ENCODE measurements at regions of chr14 and their contacts with region 1.

Region 1: DNA sequence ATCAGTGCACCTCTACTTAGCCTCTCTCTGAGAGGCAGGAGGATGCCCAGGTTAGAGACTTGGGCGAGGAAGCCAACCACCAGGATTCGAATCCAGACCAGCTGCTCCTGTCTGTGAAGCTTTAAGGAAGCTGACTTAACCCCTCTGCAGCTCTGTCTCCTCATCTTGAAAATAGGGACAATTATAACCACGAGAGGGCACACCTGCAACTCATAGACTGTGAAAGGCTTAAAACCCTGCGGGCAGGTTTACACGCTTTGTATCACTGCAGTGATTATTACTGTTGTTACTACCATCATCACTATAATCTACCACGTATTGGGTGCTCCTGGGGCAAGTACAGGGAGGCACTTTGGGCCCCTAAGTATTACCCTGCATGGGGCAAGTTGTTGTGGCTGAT is 379.8 kb downstream of the VRK1 start:
- DNase-seq: peak; percentile 77
- H3K4me3 Mint-ChIP-seq: no peak overlapping the region
- H3K27ac Mint-ChIP-seq: no peak overlapping the region
- H3K4me1 Mint-ChIP-seq: peaks cover 31% of the 10 kb centered on the region
- H3K27me3 Mint-ChIP-seq: peaks cover 9% of the 10 kb centered on the region
- CTCF ChIP-seq: peak; percentile 49

Region 2: DNA sequence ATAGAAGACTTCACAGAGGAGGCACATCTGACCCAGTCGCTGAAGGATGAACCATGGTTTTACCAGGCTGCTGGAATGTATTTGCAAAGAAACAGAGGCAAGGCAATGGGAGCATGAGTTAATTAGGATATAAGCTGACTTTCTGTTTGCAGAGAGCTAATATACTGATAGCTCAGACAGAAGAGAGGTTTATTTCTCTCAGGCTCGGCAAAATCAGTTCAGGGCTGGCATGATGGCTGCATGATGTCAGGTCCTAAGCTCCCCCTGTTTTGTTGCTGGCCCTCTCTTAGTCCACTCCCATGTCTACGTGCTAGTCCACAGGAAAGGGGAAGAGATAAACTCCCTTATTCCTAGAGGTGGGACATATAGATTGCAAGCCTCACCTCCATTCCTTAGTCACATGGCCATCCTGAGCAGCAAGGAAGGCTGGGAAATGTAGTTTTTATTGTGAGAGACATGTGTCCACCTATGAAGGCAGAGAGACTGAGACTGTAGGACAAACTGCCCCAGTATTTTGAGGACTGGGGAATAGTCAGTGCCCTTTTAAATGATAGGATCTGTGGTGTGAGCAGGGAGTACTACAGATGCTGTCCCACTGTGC is 155.3 kb before region 1 on chr14:
- CTCF ChIA-PET with region 1: no interaction called
- POLR2A ChIA-PET with region 1: no interaction called
- intact Hi-C with region 1: no loop called
- DNase-seq: peak; percentile 38
- H3K4me3 Mint-ChIP-seq: no peak overlapping the region
- H3K27ac Mint-ChIP-seq: no peak overlapping the region
- H3K4me1 Mint-ChIP-seq: no peaks in the 10 kb centered on the region
- H3K27me3 Mint-ChIP-seq: no peaks in the 10 kb centered on the region
- CTCF ChIP-seq: no peak

Region 3: GRCh38 chr14:97137705-97138104 is 39.3 kb before region 1 on chr14:
- CTCF ChIA-PET with region 1: no interaction called
- POLR2A ChIA-PET with region 1: no interaction called
- intact Hi-C with region 1: no loop called
- DNase-seq: no peak
- H3K4me3 Mint-ChIP-seq: no peak overlapping the region
- H3K27ac Mint-ChIP-seq: no peak overlapping the region
- H3K4me1 Mint-ChIP-seq: no peaks in the 10 kb centered on the region
- H3K27me3 Mint-ChIP-seq: peaks cover 10% of the 10 kb centered on the region
- CTCF ChIP-seq: no peak

Region 4: GRCh38 chr14:97408937-97409815 is 232.2 kb after region 1 on chr14:
- CTCF ChIA-PET with region 1: no interaction called
- POLR2A ChIA-PET with region 1: no interaction called
- intact Hi-C with region 1: no loop called
- DNase-seq: no peak
- H3K4me3 Mint-ChIP-seq: no peak overlapping the region
- H3K27ac Mint-ChIP-seq: no peak overlapping the region
- H3K4me1 Mint-ChIP-seq: no peaks in the 10 kb centered on the region
- H3K27me3 Mint-ChIP-seq: peaks cover 24% of the 10 kb centered on the region
- CTCF ChIP-seq: no peak

Region 5: GRCh38 chr14:97446087-97446486 is 269.1 kb after region 1 on chr14:
- CTCF ChIA-PET with region 1: no interaction called
- POLR2A ChIA-PET with region 1: no interaction called
- intact Hi-C with region 1: no loop called
- DNase-seq: no peak
- H3K4me3 Mint-ChIP-seq: no peak overlapping the region
- H3K27ac Mint-ChIP-seq: no peak overlapping the region
- H3K4me1 Mint-ChIP-seq: no peaks in the 10 kb centered on the region
- H3K27me3 Mint-ChIP-seq: no peaks in the 10 kb centered on the region
- CTCF ChIP-seq: no peak

Region 6: DNA sequence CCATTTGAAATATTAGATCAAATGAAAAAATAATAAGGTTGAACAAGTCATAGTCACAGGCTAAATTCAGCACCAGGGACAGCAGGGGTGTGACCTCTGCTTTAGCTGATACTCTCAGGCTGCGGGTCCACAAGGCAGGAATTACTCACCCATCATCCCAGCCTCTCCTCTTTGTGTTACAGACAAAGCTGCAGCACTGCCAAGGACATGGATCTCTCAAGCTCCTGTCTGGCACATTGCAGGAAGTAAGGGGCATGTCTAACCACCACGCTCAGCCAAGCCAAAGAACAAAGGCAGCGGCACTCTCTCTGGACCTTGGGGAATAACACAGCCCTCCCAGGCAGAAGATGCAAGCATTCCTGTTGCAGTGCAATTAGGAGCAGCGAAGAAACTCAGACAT is 404.0 kb after region 1 on chr14:
- CTCF ChIA-PET with region 1: no interaction called
- POLR2A ChIA-PET with region 1: no interaction called
- intact Hi-C with region 1: loop called (anchors 5 kb)
- DNase-seq: peak; percentile 27
- H3K4me3 Mint-ChIP-seq: no peak overlapping the region
- H3K27ac Mint-ChIP-seq: no peak overlapping the region
- H3K4me1 Mint-ChIP-seq: no peaks in the 10 kb centered on the region
- H3K27me3 Mint-ChIP-seq: peaks cover 16% of the 10 kb centered on the region
- CTCF ChIP-seq: no peak

Measured in MCF 10A (cell line).